ENCODE measurements at regions of chr4 and their contacts with region 1.

Region 1: GRCh38 chr4:150960818-150961217 is 54.3 kb downstream of the LRBA start:
- DNase-seq: peak; percentile 68
- H3K4me3 Mint-ChIP-seq: no peak overlapping the region
- H3K27ac Mint-ChIP-seq: no peak overlapping the region
- H3K4me1 Mint-ChIP-seq: peaks cover 57% of the 10 kb centered on the region
- H3K27me3 Mint-ChIP-seq: no peaks in the 10 kb centered on the region

Region 2: DNA sequence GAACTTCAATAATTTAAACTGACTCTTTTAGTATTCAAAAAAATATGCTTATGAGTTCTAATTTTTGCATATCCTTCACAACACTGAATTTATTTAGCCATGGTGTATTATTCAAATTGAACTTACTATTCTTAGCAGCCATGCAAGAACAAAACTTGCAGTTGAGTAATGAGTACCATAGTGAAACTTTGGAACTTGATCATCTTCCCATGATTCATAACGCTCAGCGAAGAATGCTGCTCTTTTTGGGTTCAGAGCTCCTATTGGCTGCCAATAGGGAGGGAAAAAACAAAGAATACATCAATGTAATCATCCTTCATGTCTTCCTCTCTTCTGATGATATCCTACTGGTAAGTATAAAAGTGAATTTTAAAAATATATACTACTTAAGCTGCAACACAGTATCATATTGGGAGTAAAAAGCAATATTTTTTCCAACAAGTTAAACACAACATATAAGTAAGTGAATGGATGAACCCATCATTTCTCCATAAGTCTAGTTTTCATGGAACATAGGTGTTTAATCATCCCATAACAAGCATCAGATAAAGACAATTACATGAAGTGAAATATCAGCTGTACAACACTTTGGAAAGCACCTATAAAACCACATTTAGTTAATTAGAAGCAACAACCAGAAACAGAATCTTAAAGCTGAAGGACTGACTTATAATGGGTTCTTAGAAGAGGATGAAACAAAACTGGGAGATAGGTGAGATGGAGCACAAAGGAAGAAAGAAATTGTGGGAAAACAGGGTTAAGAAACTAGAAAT is 524.0 kb before region 1 on chr4:
- CTCF ChIA-PET with region 1: no interaction called
- intact Hi-C with region 1: loop called (anchors 5 kb)
- DNase-seq: peak; percentile 42
- H3K4me3 Mint-ChIP-seq: no peak overlapping the region
- H3K27ac Mint-ChIP-seq: peak overlapping the region; percentile 66
- H3K4me1 Mint-ChIP-seq: peaks cover 15% of the 10 kb centered on the region
- H3K27me3 Mint-ChIP-seq: no peaks in the 10 kb centered on the region

Region 3: DNA sequence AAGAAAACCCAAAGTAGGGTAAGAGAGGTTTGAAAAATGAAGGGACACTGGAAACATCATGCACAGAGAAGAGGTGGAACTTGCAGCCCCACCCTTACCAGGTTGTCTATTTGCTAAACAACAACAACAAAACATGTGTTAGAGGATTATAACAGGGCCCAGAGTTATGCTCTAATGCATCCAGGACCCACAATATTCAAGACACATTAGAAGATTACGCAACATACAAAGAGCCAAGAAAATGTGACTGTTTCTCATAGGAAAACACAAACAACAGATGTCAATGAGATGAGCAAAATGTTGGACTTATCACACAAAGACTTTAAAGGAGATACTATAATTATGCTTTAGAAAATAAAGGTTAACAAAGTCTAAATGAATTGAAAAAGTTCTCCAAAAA is 74.2 kb before region 1 on chr4:
- CTCF ChIA-PET with region 1: no interaction called
- intact Hi-C with region 1: loop called (anchors 5 kb)
- DNase-seq: no peak
- H3K4me3 Mint-ChIP-seq: no peak overlapping the region
- H3K27ac Mint-ChIP-seq: no peak overlapping the region
- H3K4me1 Mint-ChIP-seq: peaks cover 19% of the 10 kb centered on the region
- H3K27me3 Mint-ChIP-seq: no peaks in the 10 kb centered on the region

Region 4: GRCh38 chr4:150950657-150951288 is 10.0 kb before region 1 on chr4:
- CTCF ChIA-PET with region 1: interaction called, 10 read pairs
- intact Hi-C with region 1: no loop called
- DNase-seq: no peak
- H3K4me3 Mint-ChIP-seq: no peak overlapping the region
- H3K27ac Mint-ChIP-seq: no peak overlapping the region
- H3K4me1 Mint-ChIP-seq: peaks cover 53% of the 10 kb centered on the region
- H3K27me3 Mint-ChIP-seq: no peaks in the 10 kb centered on the region

Region 5: DNA sequence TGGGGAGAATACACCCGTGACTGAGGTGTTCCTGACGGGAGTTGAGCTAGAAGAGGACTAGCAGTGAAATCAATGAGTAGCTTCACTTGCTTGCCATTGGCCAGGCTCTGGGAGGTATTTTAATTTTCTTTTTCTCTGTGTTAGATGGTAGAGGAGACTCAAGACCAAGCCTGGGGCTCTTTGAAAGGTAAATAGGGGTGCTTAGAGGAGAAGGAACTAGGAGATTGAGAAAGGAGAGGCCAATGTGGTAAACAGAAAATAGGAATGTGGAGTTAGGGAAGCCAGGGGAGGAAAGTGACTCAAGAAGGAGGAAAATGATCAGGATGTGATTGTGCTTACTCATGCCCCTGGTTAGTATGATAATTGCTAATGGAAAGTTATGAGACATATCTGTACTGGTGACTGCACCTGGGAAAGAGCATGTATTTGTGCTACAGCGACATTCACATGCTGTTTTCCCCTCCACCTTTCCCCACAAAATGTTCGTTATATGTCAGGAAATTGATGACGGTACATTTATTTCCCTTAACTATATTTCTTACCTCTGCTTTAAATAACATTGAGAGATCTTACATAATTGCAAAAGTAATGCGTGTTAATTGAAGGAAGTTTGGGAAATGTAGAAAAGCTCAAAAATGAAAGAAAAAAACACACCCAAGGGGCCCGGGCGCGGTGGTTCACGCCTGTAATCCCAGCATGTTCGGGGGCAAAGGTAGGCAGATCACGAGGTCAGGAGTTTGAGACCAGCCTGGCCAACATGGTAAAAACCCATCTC is 71.2 kb after region 1 on chr4:
- CTCF ChIA-PET with region 1: interaction called, 4 read pairs
- intact Hi-C with region 1: loop called (anchors 1 kb)
- DNase-seq: peak; percentile 44
- H3K4me3 Mint-ChIP-seq: peak overlapping the region; percentile 35
- H3K27ac Mint-ChIP-seq: peak overlapping the region; percentile 85
- H3K4me1 Mint-ChIP-seq: peaks cover 40% of the 10 kb centered on the region
- H3K27me3 Mint-ChIP-seq: no peaks in the 10 kb centered on the region

Region 6: GRCh38 chr4:151489462-151490203 is 528.8 kb after region 1 on chr4:
- CTCF ChIA-PET with region 1: no interaction called
- intact Hi-C with region 1: no loop called
- DNase-seq: no peak
- H3K4me3 Mint-ChIP-seq: no peak overlapping the region
- H3K27ac Mint-ChIP-seq: no peak overlapping the region
- H3K4me1 Mint-ChIP-seq: no peaks in the 10 kb centered on the region
- H3K27me3 Mint-ChIP-seq: peaks cover 2% of the 10 kb centered on the region